ENCODE measurements at regions of chr1 and their contacts with region 1.

Region 1: DNA sequence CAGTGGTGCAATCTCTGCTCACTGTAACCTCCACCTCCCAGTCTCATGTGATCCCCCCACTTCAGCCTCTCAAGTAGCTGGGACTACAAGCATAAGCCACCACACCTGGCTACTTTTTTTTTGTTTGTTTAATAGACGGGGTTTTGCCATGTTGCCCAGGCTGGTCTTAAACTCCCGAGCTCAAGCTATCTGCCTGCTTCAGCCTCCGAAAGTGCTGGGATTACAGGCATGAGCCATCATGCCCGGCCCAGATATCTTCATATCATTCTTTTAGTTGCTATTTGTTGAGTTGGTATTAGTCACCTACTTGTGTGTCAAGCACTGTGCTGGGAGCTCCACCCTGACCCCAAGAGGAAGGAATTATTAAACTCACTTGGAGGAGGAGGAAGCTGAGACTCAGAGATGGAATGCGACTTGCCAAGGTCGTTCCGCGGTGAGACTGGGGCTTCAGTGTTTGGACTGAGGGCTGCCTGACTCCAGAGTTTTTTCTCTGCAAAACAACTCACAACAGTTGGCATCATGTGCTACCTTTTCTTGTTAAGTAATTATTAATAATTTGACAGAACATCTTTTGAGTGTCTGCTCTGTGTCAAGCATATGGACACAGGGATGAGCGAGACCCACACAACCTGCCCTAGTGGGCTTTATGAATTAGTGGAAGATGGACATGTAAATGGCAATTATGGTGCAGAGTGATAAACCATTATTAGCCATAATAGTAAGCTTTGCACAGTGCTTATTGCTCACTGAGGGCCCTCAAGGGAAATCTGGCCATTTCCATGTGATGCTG is 132.0 kb downstream of the FOXD2 start:
- DNase-seq: peak; percentile 84 to 86
- ATAC-seq: peak; percentile 93 to 99
- H3K4me3 ChIP-seq: no peak overlapping the region
- H3K27ac ChIP-seq: peak overlapping the region; percentile 63 to 80
- H3K4me1 ChIP-seq: peaks cover 12% of the 10 kb centered on the region
- CTCF ChIP-seq: peak; percentile 48
- EP300 ChIP-seq: no peak
- POLR2A ChIP-seq: no peak
- RAD21 ChIP-seq: peak; percentile 50 to 51; a peak in 4 of 5 replicates

Region 2: GRCh38 chr1:47580451-47580995 is 10.6 kb after region 1 on chr1:
- CTCF ChIA-PET with region 1: interaction called, 10 read pairs
- POLR2A ChIA-PET with region 1: no interaction called
- DNase-seq: no peak
- ATAC-seq: no peak
- H3K4me3 ChIP-seq: no peak overlapping the region
- H3K27ac ChIP-seq: no peak overlapping the region
- H3K4me1 ChIP-seq: no peaks in the 10 kb centered on the region
- CTCF ChIP-seq: no peak
- EP300 ChIP-seq: no peak
- POLR2A ChIP-seq: no peak
- RAD21 ChIP-seq: no peak

Region 3: DNA sequence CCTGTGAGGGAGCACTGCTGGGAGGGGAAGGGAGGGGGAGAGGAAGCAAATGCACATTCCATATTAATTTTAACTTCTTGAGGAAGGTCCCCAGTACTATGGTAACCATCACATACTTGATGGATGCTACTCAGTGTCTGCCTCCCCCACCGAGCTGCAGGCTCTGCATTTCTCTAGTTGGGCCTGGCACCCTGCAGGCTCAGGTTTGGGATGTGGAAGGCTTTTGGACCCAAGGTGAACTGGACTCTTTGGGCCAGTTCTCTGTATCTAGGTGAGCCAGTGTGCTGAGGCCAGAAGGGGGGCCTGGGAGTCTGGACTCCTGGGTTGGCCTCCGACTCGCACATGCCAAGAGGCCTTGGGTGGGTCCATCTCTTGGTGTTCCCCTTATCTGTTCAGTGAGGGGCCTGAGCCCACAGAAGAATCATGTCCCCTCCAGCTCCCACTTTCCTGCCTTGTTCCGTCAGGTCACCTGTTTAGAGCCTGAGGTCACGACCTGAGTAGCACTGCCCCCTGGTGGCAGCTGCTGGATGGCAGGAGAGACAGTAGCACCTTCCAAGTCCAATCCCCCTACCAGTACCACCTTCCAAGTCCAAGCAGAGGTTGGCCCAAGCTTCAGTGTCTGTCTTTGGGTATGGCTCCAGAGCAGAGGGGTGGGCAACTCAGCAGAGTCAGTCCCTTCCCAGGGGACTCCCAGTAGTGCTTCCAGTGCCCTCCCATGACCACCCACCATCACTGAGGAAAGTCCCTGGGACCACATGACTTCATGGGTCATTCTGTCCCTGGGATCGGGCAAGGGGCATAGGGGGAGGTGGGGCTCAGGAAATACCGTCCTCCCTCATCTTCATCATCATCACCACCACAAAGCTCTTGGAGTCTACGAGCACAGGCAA is 185.5 kb after region 1 on chr1:
- CTCF ChIA-PET with region 1: no interaction called
- POLR2A ChIA-PET with region 1: no interaction called
- DNase-seq: peak; percentile 13 to 43
- ATAC-seq: peak; percentile 67 to 88; a peak in 4 of 6 replicates
- H3K4me3 ChIP-seq: no peak overlapping the region
- H3K27ac ChIP-seq: no peak overlapping the region
- H3K4me1 ChIP-seq: no peaks in the 10 kb centered on the region
- CTCF ChIP-seq: peak; percentile 42
- EP300 ChIP-seq: no peak
- POLR2A ChIP-seq: no peak
- RAD21 ChIP-seq: peak; percentile 14 to 24; a peak in 2 of 5 replicates